Activated CD4-positive, alpha-beta T cell treated with anti-CD3 and anti-CD28 coated beads, Interleukin-2, amount 10 ng/mL, durations not matched to agents 24 days and 14 days (primary cell): ENCODE measurements at regions of chr10 and their contacts with region 1.

Region 1: GRCh38 chr10:63268798-63269503 is 135.8 kb downstream of the NRBF2 start:
- DNase-seq: peak; percentile 95
- H3K4me3 Mint-ChIP-seq: peak overlapping the region; percentile 93
- H3K27ac Mint-ChIP-seq: peak overlapping the region; percentile 99
- H3K4me1 Mint-ChIP-seq: peaks cover 21% of the 10 kb centered on the region
- H3K27me3 Mint-ChIP-seq: no peaks in the 10 kb centered on the region

Region 2: DNA sequence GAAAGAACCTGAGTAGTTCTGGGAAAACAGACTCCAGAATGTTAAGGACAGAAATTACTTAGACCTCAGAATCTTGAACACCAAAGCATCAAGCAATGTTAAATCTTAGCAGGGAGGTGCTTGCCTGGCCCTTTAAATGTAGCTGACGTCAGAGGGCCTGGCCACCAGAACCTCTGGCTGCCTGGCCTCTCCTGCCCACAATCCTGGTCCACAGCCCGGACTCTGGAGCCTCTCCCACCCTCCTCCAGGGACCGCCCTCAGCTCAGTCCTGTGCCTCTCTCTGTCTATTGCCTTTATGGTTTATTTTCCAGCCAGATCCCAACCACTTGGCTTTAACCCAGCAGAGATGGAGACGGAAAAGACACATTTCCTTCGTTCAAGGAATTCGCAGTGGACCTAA is 410.6 kb before region 1 on chr10:
- intact Hi-C with region 1: loop called (anchors 2 kb)
- DNase-seq: no peak
- H3K4me3 Mint-ChIP-seq: no peak overlapping the region
- H3K27ac Mint-ChIP-seq: no peak overlapping the region
- H3K4me1 Mint-ChIP-seq: peaks cover 60% of the 10 kb centered on the region
- H3K27me3 Mint-ChIP-seq: peaks cover 4% of the 10 kb centered on the region

Region 3: GRCh38 chr10:63227207-63227915 is 41.6 kb before region 1 on chr10:
- intact Hi-C with region 1: loop called (anchors 1 kb)
- DNase-seq: peak; percentile 57
- H3K4me3 Mint-ChIP-seq: peak overlapping the region; percentile 71
- H3K27ac Mint-ChIP-seq: peak overlapping the region; percentile 81
- H3K4me1 Mint-ChIP-seq: peaks cover 31% of the 10 kb centered on the region
- H3K27me3 Mint-ChIP-seq: no peaks in the 10 kb centered on the region

Region 4: GRCh38 chr10:63465293-63466143 is 196.6 kb after region 1 on chr10 and contains the start of gene JMJD1C:
- intact Hi-C with region 1: loop called (anchors 1 kb)
- DNase-seq: peak; percentile 88
- H3K4me3 Mint-ChIP-seq: peak within 1 kb of the TSS; percentile 93
- H3K27ac Mint-ChIP-seq: peak within 1 kb of the TSS; percentile 67
- H3K4me1 Mint-ChIP-seq: peaks cover 17% of the 10 kb centered on the region
- H3K27me3 Mint-ChIP-seq: peaks cover 24% of the 10 kb centered on the region
- total RNA-seq, gene JMJD1C: 41.7 and 42.0 TPM in 2 replicates

Region 5: DNA sequence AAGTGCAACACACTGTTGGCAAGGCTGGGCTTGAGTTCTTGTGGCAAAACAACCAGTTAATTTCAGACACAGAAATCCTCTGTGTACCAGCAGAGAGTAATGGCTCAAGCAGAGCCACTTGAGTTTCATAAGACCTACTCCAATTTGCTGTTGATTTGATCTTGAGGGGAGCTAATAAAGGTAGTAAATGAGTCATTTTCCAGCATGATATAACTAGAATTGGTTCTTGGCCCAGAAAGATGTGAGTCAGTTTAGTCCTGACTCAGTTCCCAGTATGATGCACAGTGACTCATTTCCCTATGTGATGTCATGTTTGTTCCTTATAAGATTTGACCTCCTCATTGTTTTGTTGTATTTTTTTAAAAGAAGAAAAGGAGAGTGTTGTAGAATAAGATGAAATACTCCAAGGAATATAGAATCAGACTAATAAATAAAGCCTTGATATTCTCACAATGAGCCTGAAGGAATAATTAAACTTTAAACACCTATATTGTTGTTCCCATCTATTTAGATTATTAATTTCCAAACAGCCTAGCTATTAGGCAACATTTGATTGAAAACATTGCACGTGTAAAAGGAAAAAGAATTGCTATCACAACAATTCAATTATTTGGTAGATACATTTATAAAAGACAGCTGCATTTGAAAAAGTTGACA is 438.4 kb after region 1 on chr10:
- intact Hi-C with region 1: loop called (anchors 1 kb)
- DNase-seq: peak; percentile 63
- H3K4me3 Mint-ChIP-seq: peak overlapping the region; percentile 32
- H3K27ac Mint-ChIP-seq: peak overlapping the region; percentile 63
- H3K4me1 Mint-ChIP-seq: peaks cover 15% of the 10 kb centered on the region
- H3K27me3 Mint-ChIP-seq: no peaks in the 10 kb centered on the region